PC-3 (cell line): ENCODE measurements at regions of chr12 and their contacts with region 1.

Region 1: DNA sequence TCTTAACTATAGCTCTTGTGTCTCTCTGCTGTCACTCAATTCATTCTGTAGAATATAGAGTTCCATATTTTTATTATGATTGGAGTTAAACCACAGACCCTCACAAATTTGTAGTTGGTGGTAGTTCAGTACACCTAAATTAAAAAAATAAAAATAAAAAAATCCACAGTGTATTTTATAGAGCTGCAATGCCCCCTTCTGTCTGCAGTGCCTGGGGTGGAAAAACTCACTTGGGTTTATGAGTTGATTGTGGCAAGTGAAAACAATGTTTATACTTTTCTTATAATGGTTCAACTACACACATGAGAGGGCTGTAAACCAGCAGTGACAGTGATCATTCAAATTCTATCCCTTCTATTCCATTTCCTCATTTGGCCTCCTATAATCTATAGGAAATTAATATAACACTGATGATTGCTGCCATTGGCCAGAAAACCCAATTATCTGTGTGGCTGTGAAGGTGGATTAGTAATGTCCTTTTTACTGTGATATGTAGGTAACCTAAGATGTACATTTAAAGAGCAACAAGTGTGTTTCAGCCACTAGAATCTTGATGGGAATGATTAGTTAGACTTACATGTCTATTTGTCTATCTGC is 166.9 kb upstream of the LRIG3 start:
- DNase-seq: peak; percentile 37
- ATAC-seq: peak; percentile 50
- H3K4me3 ChIP-seq: no peak overlapping the region
- H3K27ac ChIP-seq: no peak overlapping the region
- H3K4me1 ChIP-seq: 0 out of 2 replicates have a peak, but pooled peaks cover 4% of the 10 kb centered on the region
- H3K27me3 ChIP-seq: no peaks in the 10 kb centered on the region
- CTCF ChIP-seq: peak; percentile 78

Region 2: GRCh38 chr12:57983146-57983857 is 1103.9 kb before region 1 on chr12:
- CTCF ChIA-PET with region 1: no interaction called
- POLR2A ChIA-PET with region 1: no interaction called
- intact Hi-C with region 1: loop called (anchors 2 kb)
- DNase-seq: peak; percentile 73
- ATAC-seq: no peak
- H3K4me3 ChIP-seq: no peak overlapping the region
- H3K27ac ChIP-seq: no peak overlapping the region
- H3K4me1 ChIP-seq: peaks cover 12% of the 10 kb centered on the region; the same call in 1 of the 2 replicates
- H3K27me3 ChIP-seq: no peaks in the 10 kb centered on the region
- CTCF ChIP-seq: peak; percentile 78

Region 3: DNA sequence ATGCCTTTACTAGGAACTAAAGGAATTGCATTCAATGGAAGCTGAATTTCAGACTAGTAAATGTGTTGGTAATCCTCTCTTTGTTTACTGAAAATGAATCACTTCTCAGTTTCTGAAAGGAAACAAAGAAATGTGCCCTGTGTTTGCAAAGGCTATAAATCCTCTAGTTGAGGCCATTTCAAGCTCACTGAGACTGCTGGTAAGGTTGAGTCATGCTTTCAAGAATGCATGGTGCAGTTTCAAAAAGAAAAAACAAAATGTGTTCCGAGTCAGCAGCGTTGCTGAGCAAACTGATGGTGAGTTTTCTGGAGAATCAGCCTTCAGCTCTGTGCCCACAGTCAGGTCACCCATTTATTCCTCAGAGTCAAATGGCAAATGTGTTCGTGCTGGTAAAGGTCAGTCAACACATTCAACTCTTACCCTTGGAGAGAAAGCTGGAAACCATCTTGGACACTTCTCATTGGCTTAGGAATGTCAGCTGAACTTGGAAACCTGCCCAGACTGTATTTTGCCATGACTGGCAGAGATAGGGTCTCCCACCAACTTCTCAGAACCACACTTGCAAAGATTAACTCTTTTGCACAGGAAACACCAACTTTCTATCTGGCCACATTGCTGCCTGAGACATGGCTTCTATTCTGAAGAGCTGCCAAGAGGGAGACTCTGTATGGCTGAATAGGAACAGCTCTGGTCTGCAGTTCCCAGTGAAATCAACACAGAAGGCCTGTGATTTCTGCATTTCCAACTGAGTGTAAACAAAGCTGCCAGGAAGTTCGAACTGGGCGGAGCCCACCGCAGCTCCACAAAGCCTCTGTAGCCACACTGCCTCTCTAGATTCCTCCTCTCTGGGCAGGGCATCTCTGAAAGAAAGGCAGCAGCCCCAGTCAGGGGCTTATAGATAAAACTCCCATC is 661.4 kb before region 1 on chr12:
- CTCF ChIA-PET with region 1: no interaction called
- POLR2A ChIA-PET with region 1: no interaction called
- intact Hi-C with region 1: loop called (anchors 5 kb)
- DNase-seq: peak; percentile 95
- ATAC-seq: peak; percentile 87
- H3K4me3 ChIP-seq: peak overlapping the region; percentile 51
- H3K27ac ChIP-seq: peak overlapping the region; percentile 99
- H3K4me1 ChIP-seq: peaks cover 42% of the 10 kb centered on the region
- H3K27me3 ChIP-seq: no peaks in the 10 kb centered on the region
- CTCF ChIP-seq: no peak

Region 4: GRCh38 chr12:58681731-58682130 is 405.4 kb before region 1 on chr12:
- CTCF ChIA-PET with region 1: no interaction called
- POLR2A ChIA-PET with region 1: no interaction called
- intact Hi-C with region 1: loop called (anchors 1 kb)
- DNase-seq: peak; percentile 17
- ATAC-seq: peak; percentile 48
- H3K4me3 ChIP-seq: no peak overlapping the region
- H3K27ac ChIP-seq: no peak overlapping the region
- H3K4me1 ChIP-seq: no peaks in the 10 kb centered on the region
- H3K27me3 ChIP-seq: no peaks in the 10 kb centered on the region
- CTCF ChIP-seq: 0 out of 2 replicates have a peak, but pooled peaks have one; percentile 24

Region 5: GRCh38 chr12:58919231-58920101 is 167.7 kb before region 1 on chr12:
- CTCF ChIA-PET with region 1: no interaction called
- POLR2A ChIA-PET with region 1: no interaction called
- intact Hi-C with region 1: loop called (anchors 2 kb)
- DNase-seq: peak; percentile 48
- ATAC-seq: peak; percentile 37
- H3K4me3 ChIP-seq: peak overlapping the region; percentile 97
- H3K27ac ChIP-seq: peak overlapping the region; percentile 69
- H3K4me1 ChIP-seq: peaks cover 44% of the 10 kb centered on the region
- H3K27me3 ChIP-seq: no peaks in the 10 kb centered on the region
- CTCF ChIP-seq: no peak